ENCODE measurements at regions of chrX and their contacts with region 1.

Region 1: DNA sequence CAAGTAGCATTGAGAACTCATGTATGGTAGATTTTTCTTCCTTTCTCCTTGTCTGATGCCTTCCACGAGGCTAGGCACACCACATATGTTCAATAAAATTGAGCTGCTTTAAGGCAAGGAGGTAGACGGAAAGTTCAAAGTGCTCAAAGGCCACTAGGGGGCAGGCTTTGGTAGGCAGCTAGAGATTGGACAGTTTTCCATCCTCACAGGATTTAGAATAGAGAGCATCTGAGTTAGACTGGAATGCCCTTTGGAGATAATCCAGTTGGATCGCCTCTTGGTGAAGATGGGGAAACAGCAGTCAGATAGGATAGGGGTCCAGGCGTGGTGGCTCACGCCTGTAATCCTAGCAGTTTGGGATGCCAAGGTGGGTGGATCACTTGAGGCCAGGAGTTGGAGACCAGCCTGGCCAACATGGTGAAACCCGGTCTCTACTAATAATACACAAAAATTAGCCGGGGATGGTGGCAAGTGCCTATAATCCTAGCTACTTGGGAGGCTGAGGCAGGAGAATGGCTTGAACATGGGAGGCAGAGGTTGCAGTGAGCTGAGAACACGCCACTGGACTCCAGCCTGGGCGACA is 30.4 kb downstream of the ELF4 start:
- DNase-seq: peak in 8 of 9 experiments; percentile 18 to 78 (median 64)
- ATAC-seq: no peak
- H3K4me3 ChIP-seq: no peak overlapping the region
- H3K4me3 Mint-ChIP-seq: peak overlapping the region; percentile 19
- H3K27ac ChIP-seq: peak overlapping the region in 1 of 2 experiments; percentile 82
- H3K27ac Mint-ChIP-seq: peak overlapping the region; percentile 62
- H3K4me1 ChIP-seq: peaks cover 42% of the 10 kb centered on the region
- H3K4me1 Mint-ChIP-seq: peaks cover 43% of the 10 kb centered on the region
- H3K27me3 ChIP-seq: no peaks in the 10 kb centered on the region
- H3K27me3 Mint-ChIP-seq: no peaks in the 10 kb centered on the region
- CTCF ChIP-seq: peak; percentile 63

Region 2: GRCh38 chrX:130097507-130098209 is 17.7 kb after region 1 on chrX:
- CTCF ChIA-PET with region 1: interaction called, 10 read pairs
- POLR2A ChIA-PET with region 1: interaction called, 3 read pairs
- intact Hi-C with region 1: loop called (anchors 1 kb)
- DNase-seq: peak in 5 of 9 experiments; percentile 45 to 58 (median 50)
- ATAC-seq: peak; percentile 85
- H3K4me3 ChIP-seq: no peak overlapping the region
- H3K4me3 Mint-ChIP-seq: peak overlapping the region; percentile 43
- H3K27ac ChIP-seq: peak overlapping the region; percentile 14 to 60
- H3K27ac Mint-ChIP-seq: peak overlapping the region; percentile 88
- H3K4me1 ChIP-seq: peaks cover 61% of the 10 kb centered on the region
- H3K4me1 Mint-ChIP-seq: peaks cover 62% of the 10 kb centered on the region
- H3K27me3 ChIP-seq: no peaks in the 10 kb centered on the region
- H3K27me3 Mint-ChIP-seq: no peaks in the 10 kb centered on the region
- CTCF ChIP-seq: no peak

Region 3: GRCh38 chrX:130120746-130121504 is 41.0 kb after region 1 on chrX:
- CTCF ChIA-PET with region 1: interaction called, 129 read pairs
- POLR2A ChIA-PET with region 1: interaction called, 11 read pairs
- intact Hi-C with region 1: loop called (anchors 1 kb)
- DNase-seq: peak; percentile 32 to 81 (median 65)
- ATAC-seq: peak; percentile 86
- H3K4me3 ChIP-seq: peak overlapping the region; percentile 46 to 48
- H3K4me3 Mint-ChIP-seq: peak overlapping the region; percentile 73
- H3K27ac ChIP-seq: no peak overlapping the region
- H3K27ac Mint-ChIP-seq: no peak overlapping the region
- H3K4me1 ChIP-seq: no peaks in the 10 kb centered on the region
- H3K4me1 Mint-ChIP-seq: peaks cover 7% of the 10 kb centered on the region
- H3K27me3 ChIP-seq: no peaks in the 10 kb centered on the region
- H3K27me3 Mint-ChIP-seq: no peaks in the 10 kb centered on the region
- CTCF ChIP-seq: peak; percentile 73

Region 4: GRCh38 chrX:130190801-130191200 is 110.9 kb after region 1 on chrX:
- CTCF ChIA-PET with region 1: interaction called, 88 read pairs
- POLR2A ChIA-PET with region 1: interaction called, 3 read pairs
- intact Hi-C with region 1: loop called (anchors 1 kb)
- DNase-seq: no peak
- ATAC-seq: no peak
- H3K4me3 ChIP-seq: no peak overlapping the region
- H3K4me3 Mint-ChIP-seq: no peak overlapping the region
- H3K27ac ChIP-seq: no peak overlapping the region
- H3K27ac Mint-ChIP-seq: no peak overlapping the region
- H3K4me1 ChIP-seq: no peaks in the 10 kb centered on the region
- H3K4me1 Mint-ChIP-seq: peaks cover 2% of the 10 kb centered on the region
- H3K27me3 ChIP-seq: no peaks in the 10 kb centered on the region
- H3K27me3 Mint-ChIP-seq: no peaks in the 10 kb centered on the region
- CTCF ChIP-seq: no peak

Region 5: DNA sequence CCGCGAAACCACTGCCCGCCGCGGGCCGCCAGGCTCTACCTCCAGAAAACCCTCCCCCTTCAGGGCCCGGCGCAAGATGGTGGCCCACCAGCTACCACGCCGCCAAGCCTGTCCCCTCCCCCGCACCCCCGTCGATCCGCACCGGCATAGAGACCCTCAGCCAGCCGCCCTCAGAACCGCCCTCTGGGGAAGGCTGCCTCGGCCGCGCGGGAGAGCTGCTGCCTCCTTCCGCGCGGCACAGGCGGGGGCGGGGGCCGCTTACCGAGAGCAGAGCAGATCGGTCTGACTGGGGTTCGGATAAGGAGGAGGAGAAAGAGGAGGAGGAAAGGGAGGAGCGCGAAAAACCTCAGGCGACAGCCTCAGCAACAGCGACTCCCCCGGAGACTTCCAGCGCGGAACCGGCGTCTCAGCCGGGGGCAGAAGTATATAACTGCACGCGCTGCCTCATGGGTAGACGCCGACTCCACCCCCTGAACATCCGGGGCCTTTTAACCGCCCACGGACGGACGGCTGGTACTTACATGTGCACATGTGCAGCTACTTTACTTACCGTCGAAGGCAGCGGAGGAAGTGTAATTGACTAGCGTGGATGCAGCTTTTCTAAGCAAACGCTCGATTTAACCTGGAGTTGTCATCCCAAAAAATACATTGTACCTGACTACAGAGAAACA is 188.7 kb after region 1 on chrX and contains the start of gene ZNF280C:
- CTCF ChIA-PET with region 1: interaction called, 3 read pairs
- POLR2A ChIA-PET with region 1: no interaction called
- intact Hi-C with region 1: loop called (anchors 5 to 10 kb)
- DNase-seq: peak; percentile 76 to 94 (median 88)
- ATAC-seq: peak; percentile 94
- H3K4me3 ChIP-seq: peak within 1 kb of the TSS; percentile 73 to 74
- H3K4me3 Mint-ChIP-seq: peak within 1 kb of the TSS; percentile 88
- H3K27ac ChIP-seq: peak within 1 kb of the TSS; percentile 54 to 65
- H3K27ac Mint-ChIP-seq: peak within 1 kb of the TSS; percentile 85
- H3K4me1 ChIP-seq: peaks cover 14% of the 10 kb centered on the region
- H3K4me1 Mint-ChIP-seq: peaks cover 13% of the 10 kb centered on the region
- H3K27me3 ChIP-seq: no peaks in the 10 kb centered on the region
- H3K27me3 Mint-ChIP-seq: no peaks in the 10 kb centered on the region
- CTCF ChIP-seq: no peak
- total RNA-seq, gene ZNF280C: 4.4 to 5.2 TPM

Region 6: DNA sequence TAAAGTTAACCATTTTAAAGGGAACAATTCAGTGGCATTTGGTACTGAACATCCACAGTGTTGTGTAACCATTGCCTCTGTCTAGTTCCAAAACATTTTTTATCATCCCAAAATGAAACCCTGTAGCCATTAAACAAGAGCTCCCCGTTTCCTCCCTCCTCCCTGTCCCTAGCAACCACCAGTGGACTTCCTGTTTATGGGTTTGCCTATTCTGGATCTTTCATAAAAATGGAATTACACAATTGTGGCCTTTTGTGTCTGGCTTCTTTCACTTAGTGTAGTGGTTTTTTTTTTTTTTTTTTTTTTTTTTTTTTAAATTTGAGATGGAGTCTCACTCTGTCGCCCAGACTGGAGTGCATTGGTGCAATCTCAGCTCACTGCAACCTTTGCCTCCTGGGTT is 333.5 kb after region 1 on chrX:
- CTCF ChIA-PET with region 1: no interaction called
- POLR2A ChIA-PET with region 1: no interaction called
- intact Hi-C with region 1: no loop called
- DNase-seq: no peak
- ATAC-seq: no peak
- H3K4me3 ChIP-seq: no peak overlapping the region
- H3K4me3 Mint-ChIP-seq: no peak overlapping the region
- H3K27ac ChIP-seq: no peak overlapping the region
- H3K27ac Mint-ChIP-seq: no peak overlapping the region
- H3K4me1 ChIP-seq: no peaks in the 10 kb centered on the region
- H3K4me1 Mint-ChIP-seq: peaks cover 7% of the 10 kb centered on the region
- H3K27me3 ChIP-seq: no peaks in the 10 kb centered on the region
- H3K27me3 Mint-ChIP-seq: no peaks in the 10 kb centered on the region
- CTCF ChIP-seq: no peak